ENCODE measurements at regions of chr4 and their contacts with region 1.

Region 1: GRCh38 chr4:48830706-48831531 is at the start of gene OCIAD1:
- DNase-seq: peak; percentile 100
- H3K4me3 ChIP-seq: peak within 1 kb of the TSS; percentile 94
- H3K27ac ChIP-seq: peak within 1 kb of the TSS; percentile 86
- H3K4me1 ChIP-seq: peaks cover 18% of the 10 kb centered on the region
- H3K27me3 ChIP-seq: no peaks in the 10 kb centered on the region
- total RNA-seq, gene OCIAD1: 88.9 and 147 TPM in 2 replicates

Region 2: GRCh38 chr4:48635310-48635709 is 195.6 kb before region 1 on chr4:
- in situ Hi-C with region 1: no loop called
- DNase-seq: peak; percentile 69
- H3K4me3 ChIP-seq: no peak overlapping the region
- H3K27ac ChIP-seq: no peak overlapping the region
- H3K4me1 ChIP-seq: peaks cover 13% of the 10 kb centered on the region
- H3K27me3 ChIP-seq: no peaks in the 10 kb centered on the region

Region 3: GRCh38 chr4:48944756-48945241 is 113.9 kb after region 1 on chr4:
- in situ Hi-C with region 1: loop called (anchors 25 kb)
- DNase-seq: no peak
- H3K4me3 ChIP-seq: no peak overlapping the region
- H3K27ac ChIP-seq: no peak overlapping the region
- H3K4me1 ChIP-seq: peaks cover 14% of the 10 kb centered on the region
- H3K27me3 ChIP-seq: no peaks in the 10 kb centered on the region